Heart right ventricle (tissue), 16 donors: ENCODE measurements at regions of chr15 and their contacts with region 1.

Region 1: DNA sequence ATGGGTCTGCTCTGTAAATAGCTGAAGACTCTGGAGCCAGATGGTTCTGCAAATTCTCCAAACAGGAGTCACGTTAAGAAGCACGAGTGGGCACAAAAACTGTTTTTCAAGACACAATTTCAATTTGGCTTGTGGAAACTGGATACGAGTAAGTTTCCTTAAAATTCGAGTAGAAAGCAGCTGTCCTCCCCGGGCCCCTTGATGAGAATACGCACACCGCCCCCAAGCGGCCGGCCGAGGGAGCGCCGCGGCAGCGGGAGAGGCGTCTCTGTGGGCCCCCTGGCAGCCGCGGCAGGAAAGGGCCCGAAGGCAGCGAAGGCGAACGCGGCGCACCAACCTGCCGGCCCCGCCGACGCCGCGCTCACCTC is 778 bp upstream of the THBS1 start:
- DNase-seq: peak; percentile 92 to 95
- ATAC-seq: peak; percentile 62 to 91 (median 85)
- H3K4me3 ChIP-seq: peak overlapping the region; percentile 19 to 88 (median 67)
- H3K27ac ChIP-seq: peak overlapping the region; percentile 83 to 97 (median 92)
- H3K4me1 ChIP-seq: peaks cover 2 to 62% (median 41%) of the 10 kb centered on the region in 9 donors
- H3K27me3 ChIP-seq: peaks cover 0 to 7% (median 0%) of the 10 kb centered on the region in 7 donors
- CTCF ChIP-seq: peak; percentile 88 to 99 (median 98)

Region 2: GRCh38 chr15:38707802-38708671 is 872.1 kb before region 1 on chr15:
- intact Hi-C with region 1: loop called in 5 of 10 experiments (anchors 5 to 10 kb)
- DNase-seq: peak in 1 of 2 donors; percentile 13
- ATAC-seq: peak; percentile 55 to 89 (median 78)
- H3K4me3 ChIP-seq: no peak overlapping the region
- H3K27ac ChIP-seq: no peak overlapping the region
- H3K4me1 ChIP-seq: peaks cover 0 to 5% (median 0%) of the 10 kb centered on the region in 9 donors
- H3K27me3 ChIP-seq: peaks cover 0 to 25% (median 6%) of the 10 kb centered on the region in 7 donors
- CTCF ChIP-seq: peak; percentile 29 to 77 (median 70)

Region 3: GRCh38 chr15:38828031-38828532 is 752.0 kb before region 1 on chr15:
- intact Hi-C with region 1: loop called in 1 of 10 experiments (anchors 10 kb)
- DNase-seq: no peak
- ATAC-seq: peak in 7 of 8 donors; percentile 31 to 79 (median 58)
- H3K4me3 ChIP-seq: no peak overlapping the region
- H3K27ac ChIP-seq: peak overlapping the region in 5 of 10 donors; percentile 33 to 67 (median 50)
- H3K4me1 ChIP-seq: peaks cover 0 to 22% (median 0%) of the 10 kb centered on the region in 9 donors
- H3K27me3 ChIP-seq: no peaks in the 10 kb centered on the region
- CTCF ChIP-seq: no peak

Region 4: GRCh38 chr15:39312984-39313383 is 267.1 kb before region 1 on chr15:
- intact Hi-C with region 1: loop called in 7 of 10 experiments (anchors 5 to 10 kb)
- DNase-seq: peak in 1 of 2 donors; percentile 16
- ATAC-seq: peak in 6 of 8 donors; percentile 49 to 84 (median 76)
- H3K4me3 ChIP-seq: no peak overlapping the region
- H3K27ac ChIP-seq: peak overlapping the region in 1 of 10 donors; percentile 48
- H3K4me1 ChIP-seq: peaks cover 0 to 13% (median 0%) of the 10 kb centered on the region in 9 donors
- H3K27me3 ChIP-seq: no peaks in the 10 kb centered on the region
- CTCF ChIP-seq: peak in 7 of 9 donors; percentile 30 to 59 (median 47)

Region 5: GRCh38 chr15:39465843-39466749 is 114.0 kb before region 1 on chr15:
- intact Hi-C with region 1: loop called in 1 of 10 experiments (anchors 10 kb)
- DNase-seq: peak; percentile 76 to 77
- ATAC-seq: peak; percentile 69 to 89 (median 80)
- H3K4me3 ChIP-seq: no peak overlapping the region
- H3K27ac ChIP-seq: peak overlapping the region in 9 of 10 donors; percentile 33 to 86 (median 59)
- H3K4me1 ChIP-seq: peaks cover 4 to 66% (median 42%) of the 10 kb centered on the region in 9 donors
- H3K27me3 ChIP-seq: no peaks in the 10 kb centered on the region
- CTCF ChIP-seq: no peak

Region 6: DNA sequence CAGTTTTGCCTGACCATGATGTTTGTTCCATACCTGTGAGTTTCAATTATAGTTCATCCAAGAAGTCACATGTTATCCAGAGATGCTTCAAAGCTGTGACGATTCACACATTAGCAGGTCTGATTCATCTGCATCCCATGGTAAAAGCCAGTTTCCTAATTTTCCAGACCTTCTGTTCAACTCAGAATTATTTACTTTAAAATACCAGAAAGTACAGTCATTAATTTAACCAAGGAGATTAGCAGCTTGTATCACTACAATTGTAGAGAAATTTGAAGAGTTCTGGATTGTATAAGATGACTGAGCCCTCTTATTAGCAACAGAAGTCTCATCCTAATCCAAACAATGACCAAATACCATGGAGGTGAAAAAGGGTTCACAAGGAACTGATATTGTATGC is 75.3 kb before region 1 on chr15:
- intact Hi-C with region 1: loop called in 3 of 10 experiments (anchors 5 to 10 kb)
- DNase-seq: no peak
- ATAC-seq: no peak
- H3K4me3 ChIP-seq: no peak overlapping the region
- H3K27ac ChIP-seq: peak overlapping the region in 1 of 10 donors; percentile 33
- H3K4me1 ChIP-seq: peaks cover 0 to 20% (median 0%) of the 10 kb centered on the region in 9 donors
- H3K27me3 ChIP-seq: no peaks in the 10 kb centered on the region
- CTCF ChIP-seq: no peak